Calu3 (cell line): ENCODE measurements at regions of chr19 and their contacts with region 1.

Region 1: DNA sequence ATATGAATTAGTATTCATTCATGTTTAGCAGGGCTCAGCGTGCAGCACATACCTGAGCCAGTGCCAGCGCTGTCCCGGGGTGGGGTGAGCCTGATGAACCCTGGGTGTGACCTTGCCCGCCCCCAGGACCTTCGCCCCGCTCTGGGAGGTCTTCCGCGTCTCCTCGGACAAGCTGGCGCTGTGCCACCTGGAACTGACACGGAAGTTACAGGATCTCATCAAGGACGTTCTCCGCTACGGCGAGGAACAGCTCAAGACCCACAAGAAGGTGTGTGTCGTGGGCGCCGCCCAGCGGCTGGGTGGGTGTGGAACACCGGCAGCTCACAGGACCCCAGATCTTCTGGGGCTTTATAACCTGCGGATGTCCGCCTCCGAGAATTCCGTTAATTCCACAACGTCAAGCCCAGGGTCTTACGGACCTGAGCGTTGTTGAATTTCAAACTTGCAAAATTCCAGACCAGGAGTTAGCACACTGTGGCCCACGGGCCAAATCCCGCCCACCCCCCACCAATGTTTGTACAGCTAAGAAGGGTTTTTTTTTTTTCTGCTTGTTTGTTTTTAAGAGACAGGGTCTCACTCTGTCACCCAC is 15.4 kb downstream of the FCHO1 start:
- DNase-seq: peak; percentile 89
- H3K4me3 Mint-ChIP-seq: peak overlapping the region; percentile 55
- H3K27ac Mint-ChIP-seq: no peak overlapping the region
- H3K4me1 Mint-ChIP-seq: peaks cover 8% of the 10 kb centered on the region
- H3K27me3 Mint-ChIP-seq: no peaks in the 10 kb centered on the region
- CTCF ChIP-seq: peak; percentile 70

Region 2: GRCh38 chr19:17450264-17451075 is 316.2 kb before region 1 on chr19:
- CTCF ChIA-PET with region 1: interaction called, 4 read pairs
- intact Hi-C with region 1: loop called (anchors 5 kb)
- DNase-seq: peak; percentile 14
- H3K4me3 Mint-ChIP-seq: no peak overlapping the region
- H3K27ac Mint-ChIP-seq: no peak overlapping the region
- H3K4me1 Mint-ChIP-seq: no peaks in the 10 kb centered on the region
- H3K27me3 Mint-ChIP-seq: peaks cover 15% of the 10 kb centered on the region
- CTCF ChIP-seq: no peak

Region 3: GRCh38 chr19:17605761-17606745 is 160.6 kb before region 1 on chr19:
- CTCF ChIA-PET with region 1: interaction called, 14 read pairs
- intact Hi-C with region 1: no loop called
- DNase-seq: peak; percentile 86
- H3K4me3 Mint-ChIP-seq: peak overlapping the region; percentile 83
- H3K27ac Mint-ChIP-seq: peak overlapping the region; percentile 74
- H3K4me1 Mint-ChIP-seq: peaks cover 6% of the 10 kb centered on the region
- H3K27me3 Mint-ChIP-seq: peaks cover 40% of the 10 kb centered on the region
- CTCF ChIP-seq: peak; percentile 12